Motor neuron (in vitro differentiated cells): ENCODE measurements at regions of chr2 and their contacts with region 1.

Region 1: DNA sequence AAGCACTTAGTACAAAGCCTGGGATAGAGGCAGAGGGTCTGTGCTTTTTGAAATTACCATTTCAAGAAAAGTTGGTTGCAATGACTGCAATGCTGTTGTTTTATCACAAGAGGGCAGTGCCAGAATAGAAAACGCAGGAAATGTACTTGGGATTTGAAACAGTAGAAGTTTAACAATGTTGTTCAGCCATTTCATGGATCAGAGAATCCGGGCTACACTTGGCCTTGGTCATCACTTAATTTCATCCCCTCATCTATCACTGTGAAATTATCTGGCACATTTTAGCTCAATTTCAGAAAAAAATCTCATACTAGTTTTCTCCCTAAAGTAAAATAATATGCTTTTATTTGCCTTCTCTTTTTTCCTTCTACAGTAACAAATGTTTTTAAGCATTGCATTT is 70.8 kb downstream of the RAPGEF4 start:
- ATAC-seq: peak in 6 of 8 experiments; percentile 37 to 57 (median 48)
- H3K4me3 ChIP-seq: no peak overlapping the region
- H3K27ac ChIP-seq: no peak overlapping the region
- H3K4me1 ChIP-seq: peaks cover 10 to 21% of the 10 kb centered on the region in 2 donors

Region 2: DNA sequence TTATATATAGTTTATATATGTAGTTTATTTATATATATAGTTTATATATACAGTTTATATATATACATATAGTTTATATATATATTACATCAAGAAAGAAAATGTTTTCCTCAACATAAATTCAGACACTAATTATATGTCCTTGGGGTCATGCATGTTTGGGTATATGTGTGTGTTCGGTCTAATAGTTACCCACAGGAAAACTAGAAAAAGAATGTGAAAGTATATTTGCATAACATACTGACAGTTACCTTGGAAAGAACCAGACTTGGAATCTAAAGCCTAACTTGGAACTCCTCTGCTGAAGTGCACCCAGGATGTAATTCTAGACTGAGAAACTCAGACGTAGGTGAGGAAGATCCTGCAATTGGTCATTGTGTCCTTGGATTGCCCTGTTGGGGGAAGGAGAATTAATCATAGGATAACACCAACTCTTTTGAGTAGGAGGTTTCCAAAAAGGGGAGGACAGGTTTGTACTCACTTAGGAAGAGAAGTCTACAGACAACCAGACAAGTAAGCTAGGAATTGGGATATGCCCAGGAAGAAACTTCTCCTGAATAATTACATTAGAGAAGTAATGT is 903.6 kb before region 1 on chr2:
- in situ Hi-C with region 1: no loop called
- ATAC-seq: no peak
- H3K4me3 ChIP-seq: no peak overlapping the region
- H3K27ac ChIP-seq: no peak overlapping the region
- H3K4me1 ChIP-seq: no peaks in the 10 kb centered on the region

Region 3: DNA sequence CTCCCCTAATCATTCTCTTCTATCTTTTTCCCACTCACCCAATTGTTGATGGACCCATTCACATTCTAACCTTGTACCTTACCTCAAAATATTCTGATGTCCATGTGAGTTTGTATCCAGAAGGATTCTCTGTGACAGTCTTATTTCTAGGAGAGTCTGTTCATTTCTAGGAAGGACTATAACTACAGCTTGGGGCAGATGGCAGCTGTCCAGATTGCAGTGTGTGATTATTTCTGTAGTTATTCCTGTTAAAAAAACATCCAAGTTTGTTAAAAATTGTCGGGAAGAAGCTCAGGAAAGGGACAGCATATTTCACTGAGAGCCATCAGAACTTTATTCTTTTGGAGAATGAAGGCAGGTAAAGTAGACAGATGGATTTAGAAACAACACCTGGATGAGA is 71.8 kb after region 1 on chr2:
- in situ Hi-C with region 1: no loop called
- ATAC-seq: no peak
- H3K4me3 ChIP-seq: no peak overlapping the region
- H3K27ac ChIP-seq: no peak overlapping the region
- H3K4me1 ChIP-seq: no peaks in the 10 kb centered on the region

Region 4: DNA sequence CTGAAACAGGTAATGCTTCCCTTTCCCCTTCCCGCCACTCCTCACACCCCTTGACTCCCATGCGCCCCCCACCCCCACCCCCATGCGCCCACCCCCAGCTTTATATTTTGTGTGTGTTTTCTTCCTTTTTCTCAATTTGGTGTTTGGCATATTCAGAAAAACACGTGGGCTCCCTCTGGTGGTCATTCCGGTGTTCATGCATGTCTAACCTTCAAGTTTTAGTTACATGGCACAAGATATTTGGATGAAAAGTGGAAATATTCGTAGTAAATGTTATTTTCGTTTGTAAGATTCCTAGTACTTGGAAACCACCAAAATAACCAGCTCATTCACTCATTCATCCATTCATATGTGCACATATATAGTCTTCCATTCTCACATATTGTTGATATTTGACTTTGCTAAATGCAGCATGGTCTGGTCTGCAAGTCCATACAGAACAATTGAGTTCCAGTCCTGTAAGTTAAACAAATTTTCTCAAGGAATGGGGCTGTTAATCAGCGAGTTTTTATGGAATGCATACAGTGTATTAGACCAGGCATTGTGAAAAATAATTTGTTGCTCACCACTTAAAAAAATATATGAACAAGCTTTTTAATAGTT is 125.5 kb after region 1 on chr2:
- in situ Hi-C with region 1: loop called (anchors 5 to 25 kb)
- ATAC-seq: peak in 6 of 8 experiments; percentile 25 to 44 (median 32)
- H3K4me3 ChIP-seq: no peak overlapping the region
- H3K27ac ChIP-seq: no peak overlapping the region
- H3K4me1 ChIP-seq: peaks cover 28 to 43% of the 10 kb centered on the region in 2 donors

Region 5: DNA sequence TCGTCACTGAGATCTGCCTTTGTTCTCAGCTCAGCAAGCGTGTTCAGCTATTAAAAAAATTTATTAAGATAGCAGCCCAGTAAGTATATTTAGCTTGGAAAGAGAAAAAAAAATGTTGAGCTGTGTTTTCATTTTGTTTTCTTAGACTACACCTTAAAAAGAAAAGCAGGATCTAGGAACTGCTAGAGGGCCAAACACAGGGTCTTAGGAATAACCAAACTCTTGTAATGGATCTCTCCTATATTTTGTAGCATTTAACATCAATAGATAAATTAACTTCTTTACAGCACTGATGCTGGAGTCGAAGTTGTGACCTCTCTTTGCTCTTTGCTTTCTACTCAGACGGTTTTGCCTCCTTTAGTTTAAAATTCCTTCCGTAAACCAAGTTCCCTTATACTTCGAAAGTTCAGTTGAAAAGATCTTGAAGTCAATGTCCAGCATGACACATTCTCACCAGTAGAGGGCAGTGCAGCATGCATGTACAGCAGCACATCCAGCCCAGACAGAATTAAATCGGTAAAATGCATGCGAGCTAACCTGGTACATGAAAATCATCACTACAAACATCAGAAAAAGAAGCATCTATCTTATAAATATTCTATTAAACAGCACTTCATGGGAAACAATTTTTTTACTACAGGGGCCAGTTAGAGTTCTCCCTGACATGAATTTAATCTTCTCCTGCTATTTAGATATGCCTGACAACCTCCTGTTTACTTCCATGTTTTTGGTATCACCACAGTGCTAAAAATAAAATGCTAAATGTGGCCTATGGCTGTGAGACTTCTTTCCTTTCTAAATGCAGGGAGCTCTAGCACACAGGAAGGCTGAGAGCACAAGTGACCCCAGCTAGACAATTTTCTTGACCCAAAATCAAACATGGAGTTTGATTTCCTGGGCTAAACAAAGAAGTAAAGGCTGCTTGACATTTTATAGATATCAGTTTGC is 221.0 kb after region 1 on chr2:
- in situ Hi-C with region 1: loop called in 1 of 9 experiments (anchors 25 kb)
- ATAC-seq: peak; percentile 74 to 85 (median 77)
- H3K4me3 ChIP-seq: no peak overlapping the region
- H3K27ac ChIP-seq: no peak overlapping the region
- H3K4me1 ChIP-seq: peaks cover 4% of the 10 kb centered on the region in 2 donors

Region 6: DNA sequence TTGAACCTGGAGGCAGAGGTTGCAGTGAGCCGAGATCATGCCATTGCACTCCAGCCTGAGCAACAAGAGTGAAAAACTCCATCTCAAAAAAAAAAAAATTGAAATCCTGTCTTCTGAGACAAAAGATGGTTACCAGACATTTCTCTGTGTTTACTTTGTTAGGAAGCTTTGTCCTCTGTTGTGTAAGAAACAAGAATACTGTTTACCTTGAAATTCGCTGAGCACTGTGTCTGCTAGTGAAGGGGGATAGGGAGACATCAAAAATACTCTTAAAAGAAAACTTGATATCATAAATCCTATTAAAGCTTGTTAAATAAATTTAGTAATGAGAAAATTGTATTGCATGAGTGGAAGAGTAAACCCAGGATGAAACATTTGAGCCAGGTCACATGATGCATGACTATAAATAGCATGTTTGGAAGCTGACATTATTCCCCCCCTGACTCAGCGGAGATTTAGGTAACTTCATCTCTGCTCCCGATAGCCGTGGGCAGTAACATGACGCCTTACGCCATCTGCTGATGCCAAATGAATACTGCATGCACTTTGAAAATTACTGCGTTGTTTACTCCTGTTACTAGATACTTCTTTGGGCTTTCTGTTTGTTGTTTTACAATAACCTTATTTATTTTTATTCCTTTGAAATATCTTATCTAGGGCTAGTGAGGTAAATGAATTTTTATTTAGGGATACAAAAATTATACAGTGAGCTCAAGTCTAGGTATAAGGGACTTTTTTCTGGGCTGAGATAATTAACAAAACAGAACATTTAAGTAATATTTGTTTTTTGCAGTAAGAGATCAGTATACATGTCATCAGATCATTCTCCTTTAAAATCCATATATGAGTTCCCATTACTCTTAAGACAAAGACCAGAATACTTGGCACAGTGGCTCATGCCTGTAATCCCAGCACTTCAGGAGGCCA is 404.0 kb after region 1 on chr2:
- in situ Hi-C with region 1: loop called in 2 of 9 experiments (anchors 25 kb)
- ATAC-seq: peak; percentile 97 to 100 (median 98)
- H3K4me3 ChIP-seq: no peak overlapping the region
- H3K27ac ChIP-seq: no peak overlapping the region
- H3K4me1 ChIP-seq: peaks cover 0 to 4% of the 10 kb centered on the region in 2 donors

Region 7: GRCh38 chr2:174350018-174350417 is 1543.5 kb after region 1 on chr2:
- in situ Hi-C with region 1: loop called in 1 of 9 experiments (anchors 25 kb)
- ATAC-seq: no peak
- H3K4me3 ChIP-seq: no peak overlapping the region
- H3K27ac ChIP-seq: no peak overlapping the region
- H3K4me1 ChIP-seq: no peaks in the 10 kb centered on the region